ENCODE measurements at regions of chr13 and their contacts with region 1.

Region 1: DNA sequence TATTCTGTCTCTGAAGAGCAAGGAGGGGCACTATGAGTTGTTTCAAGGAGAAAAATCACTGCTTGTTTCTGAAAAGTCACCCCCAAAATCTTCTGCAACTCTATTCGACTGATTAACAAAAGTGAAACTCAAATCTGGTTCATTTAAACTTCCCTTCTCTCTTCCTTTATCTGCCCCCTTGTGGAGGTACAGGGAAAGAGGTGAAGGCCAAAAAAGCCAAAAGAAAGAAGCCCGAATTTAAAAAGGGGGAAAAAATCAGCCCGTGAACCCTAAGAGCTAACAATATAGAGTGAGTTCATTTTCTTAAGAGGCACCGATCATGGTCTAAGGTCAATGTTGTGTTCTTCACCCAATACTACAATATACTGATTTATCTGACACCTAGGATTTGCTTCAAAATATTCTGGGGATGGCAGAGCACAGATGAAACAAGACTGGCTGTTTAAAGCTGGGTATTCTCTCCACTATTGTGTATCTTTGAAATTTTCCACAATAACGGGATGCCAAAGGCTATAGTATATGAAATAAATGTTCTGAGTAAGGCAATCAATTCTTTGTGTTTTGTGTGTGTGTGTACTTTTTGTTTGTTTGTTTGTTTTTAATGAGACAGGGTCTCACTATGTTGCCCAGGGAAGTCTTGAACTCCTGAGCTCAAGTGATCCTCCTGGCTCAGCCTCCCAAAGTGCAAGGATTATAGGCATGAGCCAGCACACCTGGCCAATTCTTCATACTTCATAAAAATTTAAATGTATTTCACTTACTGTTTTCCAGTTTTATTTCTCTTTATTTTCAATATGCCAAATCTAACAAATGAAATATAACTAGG is 55.0 kb upstream of the EEF1AKMT1 start:
- DNase-seq: no peak
- H3K4me3 ChIP-seq: peak overlapping the region; percentile 31; the same call in 1 of the 2 replicates
- CTCF ChIP-seq: peak; percentile 62

Region 2: GRCh38 chr13:20495082-20496023 is 333.4 kb before region 1 on chr13:
- CTCF ChIA-PET with region 1: interaction called, 126 read pairs
- POLR2A ChIA-PET with region 1: no interaction called
- DNase-seq: peak; percentile 24
- H3K4me3 ChIP-seq: peak overlapping the region; percentile 4; the same call in 1 of the 2 replicates
- CTCF ChIP-seq: peak; percentile 75

Region 3: GRCh38 chr13:20713751-20714150 is 115.0 kb before region 1 on chr13:
- CTCF ChIA-PET with region 1: interaction called, 110 read pairs
- POLR2A ChIA-PET with region 1: no interaction called
- DNase-seq: no peak
- H3K4me3 ChIP-seq: no peak overlapping the region
- CTCF ChIP-seq: no peak

Region 4: DNA sequence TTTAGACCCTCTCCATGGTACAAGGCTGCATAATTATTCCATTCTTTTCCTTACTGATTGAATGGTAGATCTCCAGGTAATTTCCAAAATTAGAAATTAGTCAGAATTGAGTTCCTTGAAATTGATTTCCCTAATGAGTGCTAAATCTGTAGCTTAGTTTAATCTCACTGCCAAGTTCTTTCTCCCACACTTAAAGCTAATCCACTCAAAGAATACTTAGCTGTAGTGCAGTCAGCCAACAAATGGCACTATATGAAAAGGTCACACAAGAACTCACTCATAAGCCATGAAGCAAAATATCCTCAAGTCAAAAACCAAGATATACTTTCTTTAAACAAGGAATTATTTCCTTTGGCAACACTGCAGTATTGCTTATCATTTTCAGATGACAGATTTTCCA is 11.8 kb after region 1 on chr13:
- CTCF ChIA-PET with region 1: interaction called, 29 read pairs
- POLR2A ChIA-PET with region 1: no interaction called
- DNase-seq: no peak
- H3K4me3 ChIP-seq: no peak overlapping the region
- CTCF ChIP-seq: no peak

Region 5: DNA sequence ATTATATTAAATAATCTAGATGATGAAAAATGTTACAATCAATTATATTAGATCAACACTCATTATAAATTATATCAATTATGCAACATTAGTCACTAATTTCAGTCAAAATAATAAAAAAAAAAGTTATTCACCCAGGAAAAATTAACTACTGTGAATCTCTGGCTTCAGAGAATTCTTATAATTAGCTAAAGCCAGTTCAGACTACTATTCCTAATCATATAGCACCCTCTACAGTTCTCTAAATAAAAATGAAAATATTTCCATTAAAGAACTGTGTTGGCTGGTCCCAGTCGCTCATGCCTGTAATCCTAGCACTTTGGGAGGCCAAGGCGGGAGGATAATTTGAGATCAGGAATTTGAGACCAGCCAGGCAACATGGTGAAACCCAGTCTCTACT is 40.8 kb after region 1 on chr13:
- CTCF ChIA-PET with region 1: interaction called, 20 read pairs
- POLR2A ChIA-PET with region 1: no interaction called
- DNase-seq: no peak
- H3K4me3 ChIP-seq: no peak overlapping the region
- CTCF ChIP-seq: no peak

Measured in AG04449 (cell line).